Right ventricle myocardium inferior (tissue), 1 donor: ENCODE measurements at regions of chr10 and their contacts with region 1.

Region 1: DNA sequence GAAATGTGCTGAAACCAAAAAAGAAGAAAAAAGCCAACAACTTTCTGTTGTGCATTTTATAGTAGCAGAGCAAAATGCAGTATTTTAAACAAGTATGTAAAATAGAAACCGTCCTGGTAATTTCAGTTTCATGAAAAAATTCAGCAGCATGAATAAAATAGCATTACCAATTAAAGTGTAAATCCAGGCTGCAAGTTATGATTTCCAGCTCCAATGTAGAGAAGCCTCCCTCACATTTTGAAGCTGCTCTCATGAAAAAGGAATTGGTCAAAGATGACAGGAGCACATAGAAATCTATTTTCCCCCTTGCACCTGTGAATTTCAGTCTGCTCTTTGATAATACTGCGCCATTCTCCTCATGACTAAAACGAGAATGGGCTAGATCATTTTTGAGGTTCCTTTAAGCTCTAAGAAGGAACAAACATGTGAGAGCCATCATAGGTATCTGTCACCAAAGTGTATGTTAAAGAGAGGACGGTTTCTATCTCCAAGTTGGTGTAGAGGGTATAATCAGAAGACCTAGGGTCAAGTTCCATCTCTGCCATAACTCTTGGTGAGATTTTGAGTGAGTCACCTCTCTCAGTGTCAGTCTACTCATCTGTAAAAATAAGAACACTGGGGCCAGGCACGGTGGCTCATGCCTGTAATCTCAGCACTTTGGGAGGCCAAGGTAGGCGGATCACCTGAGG is 107.5 kb downstream of the MTPAP start:
- DNase-seq: no peak
- ATAC-seq: no peak

Region 2: DNA sequence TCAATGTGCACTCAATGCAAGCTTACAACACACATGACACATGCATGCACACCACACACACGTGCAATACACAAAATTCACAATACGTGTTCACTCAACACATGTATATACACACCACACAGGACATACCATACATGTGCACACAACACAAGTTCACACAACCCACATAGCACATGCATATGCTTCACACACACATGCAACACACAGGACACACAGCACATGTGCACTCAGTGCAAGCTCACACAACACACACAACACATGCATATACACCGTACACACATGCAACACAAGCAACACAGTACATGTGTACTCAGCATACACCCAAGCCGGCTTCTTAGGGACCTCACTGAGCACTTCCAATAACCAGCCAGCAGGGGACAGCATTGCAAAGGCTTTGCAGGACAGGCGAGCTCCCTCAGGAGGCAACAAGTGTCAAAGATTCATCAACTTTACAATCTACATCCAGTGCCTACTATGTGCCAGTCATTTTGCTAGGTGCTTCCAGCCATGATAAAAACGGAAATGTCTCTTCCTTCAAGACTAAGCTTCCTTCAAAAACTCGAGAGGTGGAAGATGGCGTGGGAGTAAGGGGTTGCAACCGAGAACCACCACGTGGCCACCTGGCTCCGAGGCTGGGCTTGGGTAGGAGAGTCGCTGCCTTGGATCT is 243.3 kb before region 1 on chr10:
- intact Hi-C with region 1: loop called (anchors 1 kb)
- DNase-seq: peak; percentile 78
- ATAC-seq: peak; percentile 44

Region 3: GRCh38 chr10:30284865-30285594 is 43.5 kb after region 1 on chr10:
- intact Hi-C with region 1: no loop called
- DNase-seq: no peak
- ATAC-seq: no peak